ENCODE measurements at regions of chr10 and their contacts with region 1.

Region 1: DNA sequence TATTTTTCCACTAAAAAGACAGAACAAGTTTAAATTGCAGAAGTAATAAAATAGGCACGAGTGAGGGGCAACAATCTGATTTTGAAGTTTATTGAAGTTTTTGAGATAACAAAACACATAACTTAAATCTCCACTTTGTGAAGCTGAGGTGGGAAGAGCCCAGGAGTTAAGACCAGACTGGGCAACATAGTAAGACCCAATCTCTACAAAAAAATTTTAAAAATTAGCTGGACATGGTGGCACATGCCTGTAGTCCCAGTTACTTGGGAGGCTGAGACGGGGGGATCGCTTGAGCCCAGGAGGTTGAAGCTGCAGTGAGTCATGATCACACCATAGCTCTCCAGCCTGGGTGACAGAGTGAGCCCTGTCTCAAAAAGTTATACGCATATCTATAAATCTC is 11.2 kb downstream of the UPF2 start:
- DNase-seq: no peak
- H3K4me3 ChIP-seq: no peak overlapping the region
- H3K27ac ChIP-seq: no peak overlapping the region
- H3K4me1 ChIP-seq: no peaks in the 10 kb centered on the region
- H3K27me3 ChIP-seq: no peaks in the 10 kb centered on the region
- CTCF ChIP-seq: no peak
- EP300 ChIP-seq: no peak
- POLR2A ChIP-seq: no peak
- RAD21 ChIP-seq: no peak

Region 2: DNA sequence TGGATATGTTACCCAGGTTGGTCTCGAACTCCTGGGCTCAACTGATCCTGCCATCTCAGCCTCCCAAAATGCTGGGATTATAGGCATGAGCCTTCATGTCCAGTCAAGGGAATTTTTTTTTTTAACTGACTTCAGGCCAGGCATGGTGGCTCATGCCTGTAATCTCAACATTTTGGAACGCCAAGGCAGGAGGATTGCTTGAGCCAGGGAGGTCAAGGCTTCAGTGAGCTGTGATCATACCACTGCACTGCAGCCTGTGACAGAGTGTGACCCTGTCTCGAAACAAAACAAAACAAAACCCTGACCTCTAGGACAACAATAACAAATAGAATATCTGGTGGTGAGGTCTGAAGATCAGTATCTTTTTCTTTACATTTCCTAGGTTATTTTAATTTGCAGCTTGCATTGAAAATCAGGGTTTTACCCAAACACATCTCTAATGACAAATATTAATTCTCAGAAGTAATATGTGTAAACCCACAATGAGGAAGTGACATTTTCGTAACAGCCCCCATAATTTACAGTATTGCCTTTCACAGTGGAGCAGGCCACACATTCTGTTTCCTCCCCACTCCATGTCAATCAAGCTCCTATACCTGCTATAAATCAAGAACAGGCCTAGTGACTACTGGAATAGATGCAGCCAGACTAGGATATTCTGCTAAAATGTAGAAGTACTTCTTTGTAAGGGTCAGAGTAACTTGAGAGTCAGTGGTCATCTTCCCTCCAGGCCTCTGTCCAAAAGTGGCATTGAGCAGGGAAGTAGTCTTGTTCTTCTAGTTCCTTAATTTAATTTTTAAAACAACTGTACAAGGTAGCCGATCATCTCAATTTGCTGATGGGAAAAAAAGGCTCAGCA is 332.5 kb before region 1 on chr10:
- CTCF ChIA-PET with region 1: no interaction called
- POLR2A ChIA-PET with region 1: no interaction called
- DNase-seq: no peak
- H3K4me3 ChIP-seq: no peak overlapping the region
- H3K27ac ChIP-seq: no peak overlapping the region
- H3K4me1 ChIP-seq: no peaks in the 10 kb centered on the region
- H3K27me3 ChIP-seq: no peaks in the 10 kb centered on the region
- CTCF ChIP-seq: no peak
- EP300 ChIP-seq: no peak
- POLR2A ChIP-seq: no peak
- RAD21 ChIP-seq: no peak

Region 3: DNA sequence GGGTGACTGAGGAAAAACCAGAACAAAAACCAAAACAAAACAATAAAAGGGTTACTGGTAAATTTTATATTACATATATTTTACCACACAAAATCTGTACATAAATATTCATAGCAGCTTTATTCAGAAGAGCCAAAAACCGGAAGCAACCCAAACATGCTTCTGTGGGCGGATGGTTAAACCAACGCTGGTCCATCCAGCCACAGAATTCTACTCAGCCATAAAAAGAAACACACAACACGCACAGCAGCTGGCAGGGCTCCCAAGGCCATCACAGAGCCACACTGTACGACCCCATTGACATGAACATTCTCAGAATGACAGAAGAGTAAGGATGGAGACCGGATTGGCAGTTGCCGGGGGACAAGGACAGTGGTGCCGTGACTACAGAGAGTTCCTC is 124.7 kb before region 1 on chr10:
- CTCF ChIA-PET with region 1: no interaction called
- POLR2A ChIA-PET with region 1: no interaction called
- DNase-seq: no peak
- H3K4me3 ChIP-seq: no peak overlapping the region
- H3K27ac ChIP-seq: no peak overlapping the region
- H3K4me1 ChIP-seq: peaks cover 0 to 2% (median under 1%) of the 10 kb centered on the region in 4 experiments; a peak in 2 of 7 replicates
- H3K27me3 ChIP-seq: no peaks in the 10 kb centered on the region
- CTCF ChIP-seq: no peak
- EP300 ChIP-seq: no peak
- POLR2A ChIP-seq: no peak
- RAD21 ChIP-seq: no peak

Region 4: DNA sequence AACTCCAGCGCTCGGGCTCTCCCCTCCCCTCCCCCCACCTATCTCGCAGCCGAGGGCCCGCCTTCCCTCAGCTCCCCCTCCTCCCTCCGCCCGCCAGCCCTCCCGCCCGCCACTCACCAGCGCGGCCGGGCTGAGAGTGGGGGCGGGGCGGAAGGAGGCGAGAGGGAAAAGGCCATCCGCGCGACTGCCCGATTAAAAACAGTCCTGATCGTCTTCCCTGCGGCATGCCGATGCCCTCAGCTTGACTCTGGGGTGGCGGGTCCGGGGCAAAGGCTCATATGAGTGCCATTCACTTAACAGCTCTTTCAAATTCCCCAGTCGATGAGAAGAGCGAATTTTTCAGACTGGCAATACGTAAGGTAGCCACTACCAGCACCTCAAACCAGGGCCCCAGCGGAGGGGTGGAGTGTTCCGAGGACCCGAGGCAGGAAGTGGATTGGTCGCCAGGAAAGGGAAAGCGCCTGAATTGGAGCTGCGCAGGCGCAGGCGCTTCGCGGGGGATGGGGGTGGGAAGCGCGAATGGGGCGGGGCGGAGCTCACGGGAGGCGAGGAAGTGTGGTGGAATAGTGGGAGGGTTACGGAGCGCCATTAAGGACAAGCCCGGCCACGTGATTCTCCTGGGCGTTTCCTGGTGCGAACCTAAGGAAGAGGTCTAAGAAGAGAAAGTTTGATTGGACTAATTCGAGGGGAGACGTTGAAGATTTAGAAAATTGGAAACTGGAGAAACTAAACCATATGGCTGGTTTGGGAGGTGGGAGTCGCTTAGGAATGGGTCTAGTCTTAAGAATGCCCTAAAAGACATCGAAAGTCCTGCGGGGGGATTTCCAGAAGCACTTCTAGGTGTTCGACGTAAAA is 11.6 kb after region 1 on chr10 and contains the start of gene UPF2:
- CTCF ChIA-PET with region 1: interaction called, 4 read pairs
- POLR2A ChIA-PET with region 1: interaction called, 17 read pairs
- DNase-seq: peak; percentile 93 to 97
- H3K4me3 ChIP-seq: peak within 1 kb of the TSS; percentile 77 to 98 (median 94)
- H3K27ac ChIP-seq: peak within 1 kb of the TSS; percentile 100
- H3K4me1 ChIP-seq: no peaks in the 10 kb centered on the region; a peak in 2 of 7 replicates
- H3K27me3 ChIP-seq: no peaks in the 10 kb centered on the region
- CTCF ChIP-seq: no peak
- EP300 ChIP-seq: no peak; a peak in 1 of 3 replicates
- POLR2A ChIP-seq: no peak
- RAD21 ChIP-seq: no peak
- total RNA-seq, gene UPF2: 32.8 and 33.6 TPM in 2 replicates

Region 5: DNA sequence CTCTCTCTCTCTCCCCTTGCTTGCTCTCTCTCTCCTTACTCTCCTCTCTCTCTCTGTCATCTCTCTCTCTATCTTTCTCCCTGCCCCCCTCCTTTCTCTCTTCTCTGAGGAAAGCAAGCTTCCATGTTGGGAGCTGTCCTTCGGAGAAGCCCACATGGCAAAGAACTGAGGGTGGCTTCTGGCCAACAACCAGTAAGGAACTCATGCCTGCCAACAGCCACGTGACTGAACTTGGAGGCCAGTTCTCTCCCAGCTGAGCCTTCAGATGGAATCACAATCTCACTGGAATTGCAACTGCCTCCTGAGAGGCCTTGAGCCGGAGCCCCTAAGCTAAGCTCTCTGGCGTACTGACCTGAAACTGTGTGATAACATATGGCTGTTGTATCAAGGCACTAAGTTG is 25.3 kb after region 1 on chr10:
- CTCF ChIA-PET with region 1: no interaction called
- POLR2A ChIA-PET with region 1: no interaction called
- DNase-seq: no peak
- H3K4me3 ChIP-seq: no peak overlapping the region
- H3K27ac ChIP-seq: no peak overlapping the region
- H3K4me1 ChIP-seq: no peaks in the 10 kb centered on the region
- H3K27me3 ChIP-seq: no peaks in the 10 kb centered on the region
- CTCF ChIP-seq: no peak
- EP300 ChIP-seq: no peak
- POLR2A ChIP-seq: no peak
- RAD21 ChIP-seq: no peak

Measured in H1 (cell line).